K562 (cell line): ENCODE measurements at regions of chr7 and their contacts with region 1.

Region 1: DNA sequence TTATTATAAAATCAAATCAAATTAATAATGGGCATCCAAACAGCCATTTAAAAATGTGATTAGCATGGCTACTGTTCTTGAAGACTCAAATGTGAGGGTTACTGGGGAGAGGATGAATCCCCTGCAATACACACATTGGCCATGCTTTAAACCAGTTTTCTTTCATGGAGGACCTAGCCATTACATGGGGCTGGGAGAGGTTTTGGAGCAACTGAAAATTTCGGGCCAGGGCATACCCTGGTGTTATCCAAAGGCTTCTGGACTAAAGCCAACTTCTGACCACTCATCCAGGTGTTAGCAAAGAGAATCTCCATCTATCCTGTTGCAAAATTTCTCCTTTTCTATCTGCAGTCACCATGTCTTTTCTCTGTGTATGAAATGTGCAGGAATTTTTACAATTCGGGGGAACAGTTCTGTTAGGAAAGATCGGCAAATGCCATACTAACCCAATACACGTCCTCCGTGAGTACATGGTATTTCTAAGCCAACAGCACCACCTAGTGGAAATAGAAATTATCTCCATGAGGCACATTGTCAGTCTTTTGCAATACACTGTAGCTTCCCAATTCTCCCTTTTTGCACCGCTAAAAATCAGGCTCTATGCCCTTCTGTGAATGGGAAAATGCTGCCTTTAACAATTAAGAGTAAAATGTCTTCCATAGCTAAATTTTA is 47.0 kb upstream of the ZNF107 start:
- DNase-seq: peak; percentile 42 to 81 (median 50)
- ATAC-seq: peak; percentile 95
- H3K4me3 ChIP-seq: no peak overlapping the region
- H3K27ac ChIP-seq: no peak overlapping the region
- H3K4me1 ChIP-seq: no peaks in the 10 kb centered on the region
- H3K27me3 ChIP-seq: no peaks in the 10 kb centered on the region
- CTCF ChIP-seq: peak; percentile 48 to 84 (median 77)
- EP300 ChIP-seq: no peak
- POLR2A ChIP-seq: no peak
- RAD21 ChIP-seq: peak; percentile 84 to 96

Region 2: DNA sequence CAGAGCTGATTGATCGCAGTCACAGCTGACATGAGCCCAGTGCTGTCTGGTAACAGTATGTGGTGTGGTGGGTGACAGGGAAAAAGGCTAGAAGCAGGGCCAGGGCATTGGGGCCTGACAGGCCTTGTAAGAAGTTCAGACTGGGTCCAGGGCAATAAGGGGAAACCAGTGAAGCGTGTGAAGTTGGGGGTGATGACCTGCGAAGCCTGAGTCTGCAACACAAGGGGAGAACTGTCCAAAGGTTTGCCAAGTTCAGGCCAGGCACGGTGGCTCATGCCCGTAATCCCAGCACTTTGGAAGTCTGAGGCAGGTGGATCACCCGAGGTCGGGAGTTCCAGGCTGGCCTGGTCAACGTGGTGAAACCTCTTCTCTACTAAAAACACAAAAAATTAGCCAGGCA is 1604.1 kb before region 1 on chr7:
- CTCF ChIA-PET with region 1: no interaction called
- POLR2A ChIA-PET with region 1: no interaction called
- in situ Hi-C with region 1: no loop called
- intact Hi-C with region 1: loop called (anchors 5 kb)
- DNase-seq: no peak
- ATAC-seq: no peak
- H3K4me3 ChIP-seq: no peak overlapping the region
- H3K27ac ChIP-seq: no peak overlapping the region
- H3K4me1 ChIP-seq: no peaks in the 10 kb centered on the region
- H3K27me3 ChIP-seq: no peaks in the 10 kb centered on the region
- CTCF ChIP-seq: no peak
- EP300 ChIP-seq: no peak
- POLR2A ChIP-seq: no peak
- RAD21 ChIP-seq: no peak

Region 3: GRCh38 chr7:64180989-64181388 is 437.9 kb before region 1 on chr7:
- CTCF ChIA-PET with region 1: no interaction called
- POLR2A ChIA-PET with region 1: interaction called, 3 read pairs
- in situ Hi-C with region 1: no loop called
- intact Hi-C with region 1: loop called (anchors 1 kb)
- DNase-seq: peak in 2 of 4 experiments; percentile 18 to 21
- ATAC-seq: no peak
- H3K4me3 ChIP-seq: no peak overlapping the region
- H3K27ac ChIP-seq: no peak overlapping the region
- H3K4me1 ChIP-seq: no peaks in the 10 kb centered on the region; a peak in 1 of 5 replicates
- H3K27me3 ChIP-seq: no peaks in the 10 kb centered on the region
- CTCF ChIP-seq: peak in 2 of 3 experiments; percentile 46 to 48; a peak in 4 of 6 replicates
- EP300 ChIP-seq: no peak
- POLR2A ChIP-seq: no peak
- RAD21 ChIP-seq: peak in 1 of 2 experiments; percentile 41; a peak in 2 of 4 replicates

Region 4: GRCh38 chr7:64320547-64321513 is 298.1 kb before region 1 on chr7:
- CTCF ChIA-PET with region 1: no interaction called
- POLR2A ChIA-PET with region 1: no interaction called
- in situ Hi-C with region 1: no loop called
- intact Hi-C with region 1: loop called (anchors 1 kb)
- DNase-seq: no peak
- ATAC-seq: peak; percentile 76
- H3K4me3 ChIP-seq: no peak overlapping the region
- H3K27ac ChIP-seq: no peak overlapping the region
- H3K4me1 ChIP-seq: no peaks in the 10 kb centered on the region
- H3K27me3 ChIP-seq: no peaks in the 10 kb centered on the region
- CTCF ChIP-seq: no peak
- EP300 ChIP-seq: no peak
- POLR2A ChIP-seq: no peak
- RAD21 ChIP-seq: no peak

Region 5: GRCh38 chr7:64747802-64748201 is 128.9 kb after region 1 on chr7:
- CTCF ChIA-PET with region 1: no interaction called
- POLR2A ChIA-PET with region 1: no interaction called
- in situ Hi-C with region 1: no loop called
- intact Hi-C with region 1: no loop called
- DNase-seq: no peak
- ATAC-seq: no peak
- H3K4me3 ChIP-seq: no peak overlapping the region
- H3K27ac ChIP-seq: no peak overlapping the region
- H3K4me1 ChIP-seq: no peaks in the 10 kb centered on the region
- H3K27me3 ChIP-seq: no peaks in the 10 kb centered on the region
- CTCF ChIP-seq: no peak
- EP300 ChIP-seq: no peak
- POLR2A ChIP-seq: no peak
- RAD21 ChIP-seq: no peak